ENCODE measurements at regions of chr13 and their contacts with region 1.

Region 1: DNA sequence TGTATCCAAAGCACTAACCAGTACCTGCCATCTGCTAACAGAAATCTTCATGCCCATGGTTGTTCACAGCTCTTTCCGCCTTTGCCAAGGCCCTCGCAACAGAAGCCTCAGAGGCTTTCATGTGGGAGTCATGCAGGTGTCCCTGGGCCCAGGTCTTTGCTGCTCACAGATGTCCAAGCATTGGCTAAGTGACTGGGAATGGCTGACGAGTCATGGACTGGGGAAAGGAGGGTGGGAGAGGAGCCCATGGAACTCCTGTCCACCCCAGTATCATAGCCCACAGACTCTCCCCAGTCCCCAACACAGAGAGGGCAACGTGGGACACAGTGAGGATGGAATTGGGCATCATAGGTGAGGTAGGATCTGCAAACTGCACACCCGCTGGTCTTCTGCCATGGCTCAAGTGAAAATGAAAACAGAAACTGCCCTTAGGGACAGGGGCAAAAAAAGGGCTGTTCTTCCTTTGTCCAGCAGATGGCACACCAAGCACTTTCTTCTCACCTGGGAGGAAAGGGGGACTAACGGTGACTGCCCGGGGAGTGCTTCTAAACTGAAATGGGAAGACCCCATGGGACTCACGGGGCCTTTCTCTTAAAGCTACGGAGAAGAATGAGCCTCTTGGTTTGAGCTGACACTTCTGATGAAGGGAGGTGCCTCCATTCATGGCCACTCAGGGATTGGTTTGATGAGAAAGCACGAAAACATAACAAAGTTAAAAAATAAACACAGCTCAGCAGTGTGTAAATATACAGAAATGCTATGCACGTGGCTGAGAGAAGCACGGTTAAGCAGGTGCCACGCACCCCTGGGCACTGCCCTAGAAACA is 11.1 kb upstream of the DHRS12 start:
- DNase-seq: peak; percentile 87
- ATAC-seq: peak; percentile 74
- H3K4me3 Mint-ChIP-seq: peak overlapping the region; percentile 53
- H3K27ac Mint-ChIP-seq: peak overlapping the region; percentile 87
- H3K4me1 Mint-ChIP-seq: peaks cover 74% of the 10 kb centered on the region
- H3K27me3 Mint-ChIP-seq: no peaks in the 10 kb centered on the region
- CTCF ChIP-seq: peak; percentile 76

Region 2: DNA sequence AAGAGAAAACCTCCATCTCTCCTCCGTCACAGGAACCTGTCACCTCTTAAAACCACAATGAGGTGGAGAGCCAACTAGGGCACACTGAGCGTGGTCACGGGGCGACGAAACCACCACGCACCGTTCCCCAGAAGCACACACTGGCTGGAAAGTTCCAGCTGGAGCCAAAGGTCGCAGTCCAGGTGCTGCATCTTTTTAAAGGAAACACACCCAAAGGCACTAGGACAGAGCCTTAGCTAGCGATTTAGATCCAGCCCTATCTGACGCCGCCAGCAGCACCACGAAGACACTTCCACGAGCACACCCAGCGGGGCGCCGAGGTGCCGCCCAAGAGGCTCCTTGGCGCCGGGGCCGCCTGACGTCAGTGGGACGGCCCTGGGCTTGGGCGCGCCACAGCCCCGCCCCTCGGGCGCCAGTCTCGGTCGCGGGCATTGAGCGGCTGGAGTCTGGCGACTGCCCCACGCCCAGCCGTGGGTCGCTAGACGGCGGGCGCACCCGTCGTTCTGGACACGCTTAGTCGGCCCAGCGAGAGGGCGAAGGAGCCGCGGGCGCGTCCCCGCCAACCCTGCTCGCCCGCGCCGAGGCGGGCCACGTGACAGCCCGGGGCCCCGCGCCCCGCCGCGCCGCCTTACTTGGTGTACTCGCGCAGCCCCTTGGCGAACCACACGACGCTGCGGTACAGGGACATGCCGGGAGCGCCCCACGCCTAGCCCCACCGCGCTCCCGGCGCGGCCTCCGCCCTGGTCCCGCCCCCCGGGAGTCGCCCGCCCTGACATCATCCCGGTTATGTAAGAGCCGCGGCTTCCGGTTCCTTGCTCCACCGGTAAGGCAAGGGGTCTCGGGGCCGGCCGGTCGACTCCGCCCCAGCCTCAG is 11.4 kb before region 1 on chr13 and contains the start of gene DHRS12:
- CTCF ChIA-PET with region 1: interaction called, 53 read pairs
- POLR2A ChIA-PET with region 1: interaction called, 10 read pairs
- intact Hi-C with region 1: no loop called
- DNase-seq: peak; percentile 90
- ATAC-seq: peak; percentile 78
- H3K4me3 Mint-ChIP-seq: peak within 1 kb of the TSS; percentile 95
- H3K27ac Mint-ChIP-seq: peak within 1 kb of the TSS; percentile 100
- H3K4me1 Mint-ChIP-seq: peaks cover 55% of the 10 kb centered on the region
- H3K27me3 Mint-ChIP-seq: no peaks in the 10 kb centered on the region
- CTCF ChIP-seq: no peak
- total RNA-seq, gene DHRS12: 6.6 to 6.7 TPM

Region 3: GRCh38 chr13:51832471-51833152 is 17.6 kb after region 1 on chr13:
- CTCF ChIA-PET with region 1: interaction called, 150 read pairs
- POLR2A ChIA-PET with region 1: interaction called, 6 read pairs
- intact Hi-C with region 1: loop called (anchors 2 kb)
- DNase-seq: peak; percentile 73
- ATAC-seq: peak; percentile 98
- H3K4me3 Mint-ChIP-seq: no peak overlapping the region
- H3K27ac Mint-ChIP-seq: no peak overlapping the region
- H3K4me1 Mint-ChIP-seq: peaks cover 59% of the 10 kb centered on the region
- H3K27me3 Mint-ChIP-seq: no peaks in the 10 kb centered on the region
- CTCF ChIP-seq: peak; percentile 68

Region 4: GRCh38 chr13:51844862-51845573 is 30.0 kb after region 1 on chr13 and contains the start of gene TMEM272:
- CTCF ChIA-PET with region 1: interaction called, 54 read pairs
- POLR2A ChIA-PET with region 1: no interaction called
- intact Hi-C with region 1: no loop called
- DNase-seq: peak; percentile 70
- ATAC-seq: peak; percentile 91
- H3K4me3 Mint-ChIP-seq: peak within 1 kb of the TSS; percentile 60
- H3K27ac Mint-ChIP-seq: no peak within 1 kb of the TSS
- H3K4me1 Mint-ChIP-seq: peaks cover 12% of the 10 kb centered on the region
- H3K27me3 Mint-ChIP-seq: peaks cover 4% of the 10 kb centered on the region
- CTCF ChIP-seq: peak; percentile 98
- total RNA-seq, gene TMEM272: 0.18 to 0.32 TPM

Region 5: DNA sequence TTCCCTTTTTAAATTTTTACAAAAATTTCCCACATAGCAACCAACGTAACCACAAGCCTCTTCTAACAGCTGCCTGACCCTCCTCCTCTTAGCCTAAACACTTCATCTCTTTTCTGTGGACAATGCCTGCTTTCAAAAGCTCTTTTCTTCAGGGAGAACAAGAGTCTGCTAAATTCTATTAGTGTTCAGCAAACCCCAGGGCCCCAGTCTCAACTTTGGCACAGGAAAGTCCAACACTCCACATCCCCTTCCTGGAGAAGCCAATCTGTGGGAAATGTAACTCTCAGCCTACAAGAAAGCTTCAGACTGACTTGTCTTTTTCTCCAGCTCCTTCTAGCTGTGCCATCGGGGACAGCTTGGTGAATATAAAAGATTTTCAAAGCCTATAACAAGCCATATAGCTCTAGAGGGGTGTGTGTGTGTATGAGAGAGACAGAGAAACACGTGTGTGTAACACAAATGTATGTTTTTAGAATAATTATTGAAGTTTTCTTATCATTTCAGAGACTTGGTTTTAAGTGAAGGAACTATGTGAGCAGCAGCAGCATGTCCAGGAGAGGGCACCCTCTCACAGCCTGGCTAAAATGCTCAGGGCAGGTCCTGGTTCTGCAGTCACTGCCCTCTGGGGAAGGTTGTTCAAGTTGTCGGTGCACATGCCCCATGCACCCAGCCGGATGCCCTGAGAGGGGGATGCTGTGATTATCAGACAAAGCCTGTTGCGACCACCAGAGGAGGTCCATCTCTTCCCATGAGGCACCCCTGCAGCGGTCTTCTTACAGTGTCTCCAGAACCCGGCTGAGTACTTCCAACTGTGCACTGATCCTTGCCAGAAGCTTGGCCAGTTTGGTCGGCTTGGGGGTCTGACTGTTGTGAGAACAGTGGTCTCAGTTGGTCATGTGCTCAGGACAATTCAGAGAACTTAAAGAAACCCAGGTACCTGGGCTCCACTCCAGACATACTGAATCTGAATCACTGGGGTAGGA is 81.2 kb after region 1 on chr13:
- CTCF ChIA-PET with region 1: interaction called, 13 read pairs
- POLR2A ChIA-PET with region 1: no interaction called
- intact Hi-C with region 1: no loop called
- DNase-seq: peak; percentile 64
- ATAC-seq: peak; percentile 67
- H3K4me3 Mint-ChIP-seq: no peak overlapping the region
- H3K27ac Mint-ChIP-seq: no peak overlapping the region
- H3K4me1 Mint-ChIP-seq: no peaks in the 10 kb centered on the region
- H3K27me3 Mint-ChIP-seq: no peaks in the 10 kb centered on the region
- CTCF ChIP-seq: peak; percentile 59